ENCODE measurements at regions of chr13 and their contacts with region 1.

Region 1: DNA sequence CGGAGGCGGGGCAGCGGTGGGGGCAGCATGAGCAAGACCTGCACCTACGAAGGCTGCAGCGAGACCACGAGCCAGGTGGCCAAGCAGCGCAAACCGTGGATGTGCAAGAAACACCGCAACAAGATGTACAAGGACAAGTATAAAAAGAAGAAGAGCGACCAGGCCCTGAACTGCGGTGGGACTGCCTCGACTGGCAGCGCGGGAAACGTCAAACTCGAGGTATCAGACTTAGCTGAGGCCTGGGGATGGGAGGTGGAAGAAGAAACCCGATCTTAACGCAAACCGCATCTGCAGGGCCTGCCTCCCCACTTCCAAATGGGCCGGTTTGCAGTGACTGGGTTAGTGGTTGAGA is 693 bp downstream of the RFXAP start:
- DNase-seq: no peak
- H3K4me3 ChIP-seq: peak overlapping the region; percentile 51 to 95 (median 82)
- H3K27ac ChIP-seq: peak overlapping the region in 5 of 8 donors; percentile 86 to 93 (median 90)
- H3K4me1 ChIP-seq: peaks cover 10 to 63% (median 43%) of the 10 kb centered on the region in 6 donors
- H3K27me3 ChIP-seq: no peaks in the 10 kb centered on the region
- CTCF ChIP-seq: no peak
- POLR2A ChIP-seq: no peak

Region 2: GRCh38 chr13:36999054-36999714 is 179.5 kb after region 1 on chr13 and contains the start of gene ALG5:
- intact Hi-C with region 1: loop called (anchors 10 kb)
- DNase-seq: peak; percentile 99
- H3K4me3 ChIP-seq: peak within 1 kb of the TSS; percentile 67 to 94 (median 84)
- H3K27ac ChIP-seq: peak within 1 kb of the TSS; percentile 95 to 99 (median 98)
- H3K4me1 ChIP-seq: peaks cover 20 to 60% (median 38%) of the 10 kb centered on the region in 6 donors
- H3K27me3 ChIP-seq: no peaks in the 10 kb centered on the region
- CTCF ChIP-seq: peak; percentile 26 to 99 (median 99)
- POLR2A ChIP-seq: no peak
- total RNA-seq, gene ALG5: 20.8 to 36.8 (median 24.6) TPM

Measured in spleen (tissue), 13 donors.